Panc1 (cell line): ENCODE measurements at regions of chr7 and their contacts with region 1.

Region 1: GRCh38 chr7:33895025-33895804 is 10.1 kb upstream of the BMPER start:
- DNase-seq: peak; percentile 33
- ATAC-seq: peak; percentile 98
- H3K4me3 ChIP-seq: no peak overlapping the region
- H3K27ac ChIP-seq: no peak overlapping the region
- H3K4me1 ChIP-seq: no peaks in the 10 kb centered on the region
- H3K27me3 ChIP-seq: peaks cover 36% of the 10 kb centered on the region
- CTCF ChIP-seq: peak; percentile 97

Region 2: DNA sequence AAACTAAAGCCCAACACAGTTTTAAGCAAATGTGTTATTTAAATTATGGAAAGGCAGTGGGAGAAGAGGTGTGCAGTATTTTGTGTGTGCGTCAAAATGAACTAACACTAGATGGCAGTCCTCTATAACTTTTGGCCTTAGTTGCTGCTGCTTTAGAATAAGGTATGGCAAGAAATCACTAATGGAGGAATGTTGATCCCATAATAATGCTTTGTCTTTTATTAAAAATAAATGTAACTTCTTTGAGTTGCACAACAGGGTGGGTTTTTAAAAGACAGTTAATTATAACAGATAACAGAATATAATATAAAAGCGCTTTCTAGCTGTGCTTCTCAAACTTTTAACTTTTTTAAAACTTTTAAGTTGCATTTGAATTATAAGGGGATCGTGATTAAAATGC is 709.4 kb before region 1 on chr7:
- CTCF ChIA-PET with region 1: no interaction called
- POLR2A ChIA-PET with region 1: no interaction called
- in situ Hi-C with region 1: no loop called
- intact Hi-C with region 1: loop called (anchors 10 kb)
- DNase-seq: peak; percentile 48
- ATAC-seq: peak; percentile 91
- H3K4me3 ChIP-seq: no peak overlapping the region
- H3K27ac ChIP-seq: no peak overlapping the region
- H3K4me1 ChIP-seq: no peaks in the 10 kb centered on the region
- H3K27me3 ChIP-seq: peaks cover 2% of the 10 kb centered on the region; the same call in 1 of the 2 replicates
- CTCF ChIP-seq: peak; percentile 79; the same call in 1 of the 2 replicates

Region 3: GRCh38 chr7:33459340-33459751 is 435.9 kb before region 1 on chr7:
- CTCF ChIA-PET with region 1: interaction called, 3 read pairs
- POLR2A ChIA-PET with region 1: no interaction called
- in situ Hi-C with region 1: no loop called
- intact Hi-C with region 1: loop called (anchors 10 kb)
- DNase-seq: peak; percentile 18
- ATAC-seq: peak; percentile 89
- H3K4me3 ChIP-seq: no peak overlapping the region
- H3K27ac ChIP-seq: no peak overlapping the region
- H3K4me1 ChIP-seq: no peaks in the 10 kb centered on the region
- H3K27me3 ChIP-seq: no peaks in the 10 kb centered on the region
- CTCF ChIP-seq: peak; percentile 69

Region 4: DNA sequence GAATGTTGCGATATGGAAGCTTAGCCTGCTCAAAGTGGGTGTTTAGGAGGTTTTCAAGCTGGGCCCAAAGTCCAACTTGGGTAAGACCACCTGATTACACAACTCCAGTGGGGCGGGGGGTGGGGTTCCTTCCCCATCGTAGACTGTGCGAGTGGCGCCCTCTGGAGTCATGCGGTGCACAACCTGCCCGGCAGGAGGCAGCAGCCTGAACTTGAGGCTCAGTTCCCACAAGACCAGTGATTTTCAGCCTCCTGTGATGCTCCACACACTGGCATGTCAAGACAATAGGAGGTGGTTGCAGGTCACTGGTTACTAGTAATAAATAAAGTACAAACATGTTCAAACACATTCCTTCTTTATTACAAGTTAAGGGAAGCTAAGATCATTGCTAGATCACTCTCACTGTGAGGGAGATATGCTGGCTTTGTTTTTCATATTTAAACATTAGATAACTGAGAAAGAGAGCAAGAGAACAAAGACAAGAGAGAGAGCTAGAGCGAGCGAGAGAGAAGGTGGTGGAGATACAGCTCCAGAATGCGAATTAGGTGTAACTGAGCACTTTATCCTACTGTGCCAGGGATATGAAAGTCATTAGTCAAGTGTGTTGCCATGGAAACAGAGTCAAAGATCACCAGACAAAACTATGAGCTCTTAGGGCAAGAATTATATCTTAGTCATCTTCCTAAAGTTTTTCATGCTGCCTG is 87.3 kb before region 1 on chr7:
- CTCF ChIA-PET with region 1: no interaction called
- POLR2A ChIA-PET with region 1: no interaction called
- in situ Hi-C with region 1: no loop called
- intact Hi-C with region 1: no loop called
- DNase-seq: no peak
- ATAC-seq: no peak
- H3K4me3 ChIP-seq: no peak overlapping the region
- H3K27ac ChIP-seq: no peak overlapping the region
- H3K4me1 ChIP-seq: no peaks in the 10 kb centered on the region
- H3K27me3 ChIP-seq: no peaks in the 10 kb centered on the region; the same call in 1 of the 2 replicates
- CTCF ChIP-seq: peak; percentile 61